CD4-positive, alpha-beta T cell (primary cell): ENCODE measurements at regions of chr2 and their contacts with region 1.

Region 1: GRCh38 chr2:121530212-121530705 is 421 bp upstream of the RNU4ATAC start:
- DNase-seq: peak in 13 of 14 experiments; percentile 77 to 92 (median 81)
- ATAC-seq: peak; percentile 72
- H3K4me3 ChIP-seq: peak overlapping the region; percentile 94
- H3K4me3 Mint-ChIP-seq: peak overlapping the region; percentile 97
- H3K27ac ChIP-seq: peak overlapping the region; percentile 99 to 100
- H3K27ac Mint-ChIP-seq: peak overlapping the region; percentile 96
- H3K4me1 ChIP-seq: peaks cover 18% of the 10 kb centered on the region
- H3K4me1 Mint-ChIP-seq: peaks cover 48% of the 10 kb centered on the region
- H3K27me3 ChIP-seq: no peaks in the 10 kb centered on the region
- H3K27me3 Mint-ChIP-seq: no peaks in the 10 kb centered on the region
- CTCF ChIP-seq: no peak

Region 2: GRCh38 chr2:121400201-121400600 is 130.1 kb before region 1 on chr2:
- CTCF ChIA-PET with region 1: interaction called, 5 read pairs
- POLR2A ChIA-PET with region 1: interaction called, 7 read pairs
- intact Hi-C with region 1: loop called in 1 of 2 experiments (anchors 5 kb)
- DNase-seq: no peak
- ATAC-seq: no peak
- H3K4me3 ChIP-seq: no peak overlapping the region
- H3K4me3 Mint-ChIP-seq: no peak overlapping the region
- H3K27ac ChIP-seq: no peak overlapping the region
- H3K27ac Mint-ChIP-seq: no peak overlapping the region
- H3K4me1 ChIP-seq: no peaks in the 10 kb centered on the region
- H3K4me1 Mint-ChIP-seq: no peaks in the 10 kb centered on the region
- H3K27me3 ChIP-seq: no peaks in the 10 kb centered on the region
- H3K27me3 Mint-ChIP-seq: no peaks in the 10 kb centered on the region
- CTCF ChIP-seq: no peak

Region 3: DNA sequence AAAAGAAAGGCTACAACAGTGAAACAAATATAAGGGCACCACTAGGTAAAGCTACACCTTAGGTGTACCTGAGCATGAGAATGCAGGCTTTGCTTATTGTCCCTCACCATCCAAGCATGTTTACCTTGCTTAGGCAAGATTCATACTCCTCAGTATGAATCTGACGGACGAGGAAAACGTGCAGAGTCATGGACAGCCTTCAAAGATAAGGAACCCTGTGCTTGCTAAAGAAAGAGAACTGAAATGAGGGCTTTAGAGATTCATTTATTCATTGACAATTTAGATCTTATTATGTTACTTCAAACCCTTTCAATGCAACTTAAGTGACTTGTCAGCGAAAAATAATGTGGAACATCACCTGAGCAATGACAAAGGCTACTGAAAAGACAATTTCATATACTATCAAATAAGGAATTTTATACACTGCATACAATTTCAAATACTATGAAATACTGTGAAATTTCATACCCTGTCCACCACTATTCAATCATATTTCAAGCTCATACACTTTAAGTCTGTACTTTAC is 97.3 kb after region 1 on chr2:
- CTCF ChIA-PET with region 1: no interaction called
- POLR2A ChIA-PET with region 1: no interaction called
- intact Hi-C with region 1: no loop called
- DNase-seq: no peak
- ATAC-seq: no peak
- H3K4me3 ChIP-seq: no peak overlapping the region
- H3K4me3 Mint-ChIP-seq: no peak overlapping the region
- H3K27ac ChIP-seq: no peak overlapping the region
- H3K27ac Mint-ChIP-seq: no peak overlapping the region
- H3K4me1 ChIP-seq: no peaks in the 10 kb centered on the region
- H3K4me1 Mint-ChIP-seq: peaks cover 26% of the 10 kb centered on the region
- H3K27me3 ChIP-seq: no peaks in the 10 kb centered on the region
- H3K27me3 Mint-ChIP-seq: no peaks in the 10 kb centered on the region
- CTCF ChIP-seq: no peak

Region 4: GRCh38 chr2:121699421-121700333 is 169.4 kb after region 1 on chr2:
- CTCF ChIA-PET with region 1: interaction called, 8 read pairs
- POLR2A ChIA-PET with region 1: interaction called, 12 read pairs
- intact Hi-C with region 1: loop called in 1 of 2 experiments (anchors 5 kb)
- DNase-seq: peak; percentile 63 to 94 (median 75)
- ATAC-seq: peak; percentile 94
- H3K4me3 ChIP-seq: peak overlapping the region; percentile 39
- H3K4me3 Mint-ChIP-seq: peak overlapping the region; percentile 75
- H3K27ac ChIP-seq: peak overlapping the region; percentile 58 to 74
- H3K27ac Mint-ChIP-seq: peak overlapping the region; percentile 88
- H3K4me1 ChIP-seq: peaks cover 28% of the 10 kb centered on the region
- H3K4me1 Mint-ChIP-seq: peaks cover 38% of the 10 kb centered on the region
- H3K27me3 ChIP-seq: no peaks in the 10 kb centered on the region
- H3K27me3 Mint-ChIP-seq: no peaks in the 10 kb centered on the region
- CTCF ChIP-seq: no peak

Region 5: GRCh38 chr2:121736462-121737341 is 206.4 kb after region 1 on chr2 and contains the start of gene NIFK:
- CTCF ChIA-PET with region 1: interaction called, 7 read pairs
- POLR2A ChIA-PET with region 1: interaction called, 52 read pairs
- intact Hi-C with region 1: loop called (anchors 1 kb)
- DNase-seq: peak; percentile 99 to 100 (median 100)
- ATAC-seq: peak; percentile 86
- H3K4me3 ChIP-seq: peak within 1 kb of the TSS; percentile 67
- H3K4me3 Mint-ChIP-seq: peak within 1 kb of the TSS; percentile 97
- H3K27ac ChIP-seq: peak within 1 kb of the TSS; percentile 78 to 89
- H3K27ac Mint-ChIP-seq: peak within 1 kb of the TSS; percentile 99
- H3K4me1 ChIP-seq: peaks cover 28% of the 10 kb centered on the region
- H3K4me1 Mint-ChIP-seq: peaks cover 47% of the 10 kb centered on the region
- H3K27me3 ChIP-seq: no peaks in the 10 kb centered on the region
- H3K27me3 Mint-ChIP-seq: no peaks in the 10 kb centered on the region
- CTCF ChIP-seq: no peak
- total RNA-seq, gene NIFK: 43.6 to 47.7 TPM

Region 6: DNA sequence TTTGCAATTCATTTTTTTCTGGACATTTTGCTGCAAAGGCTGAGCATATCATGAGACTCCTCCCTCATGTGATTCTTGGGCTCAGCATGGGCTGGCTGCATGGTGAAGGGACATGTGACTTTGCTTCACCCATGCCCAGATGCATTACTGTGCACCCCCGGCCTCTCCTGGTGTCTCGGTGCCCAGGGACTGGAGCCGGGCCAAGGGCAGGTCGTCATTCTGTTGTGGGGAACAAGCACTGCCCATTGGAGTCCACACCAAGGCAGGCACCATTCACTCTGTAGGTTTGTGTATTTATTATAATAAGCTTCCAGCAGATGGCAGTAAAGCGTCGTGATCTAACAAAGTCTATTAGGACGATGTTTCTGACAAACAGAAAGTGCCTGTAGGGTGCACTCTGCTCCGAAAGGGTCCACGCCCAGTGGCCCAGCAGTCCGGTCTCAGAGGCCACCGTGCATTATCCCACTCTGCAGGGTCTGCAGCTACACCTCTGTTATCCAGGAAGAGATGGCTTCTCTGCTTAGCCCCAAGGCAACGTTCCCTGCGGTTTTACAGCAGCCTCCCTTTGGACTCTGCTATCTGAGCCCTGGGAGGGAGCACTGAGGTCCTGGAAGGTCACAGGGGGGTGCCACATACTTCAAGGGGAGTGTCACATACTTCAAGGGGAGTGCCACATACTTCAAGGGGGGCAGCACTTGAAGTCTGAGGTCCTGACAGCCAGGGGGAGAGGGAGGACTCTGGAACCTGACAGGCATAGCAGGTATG is 444.8 kb after region 1 on chr2:
- CTCF ChIA-PET with region 1: no interaction called
- POLR2A ChIA-PET with region 1: no interaction called
- intact Hi-C with region 1: loop called in 1 of 2 experiments (anchors 5 kb)
- DNase-seq: peak in 13 of 14 experiments; percentile 3 to 75 (median 12)
- ATAC-seq: peak; percentile 89
- H3K4me3 ChIP-seq: peak overlapping the region; percentile 49
- H3K4me3 Mint-ChIP-seq: peak overlapping the region; percentile 85
- H3K27ac ChIP-seq: no peak overlapping the region
- H3K27ac Mint-ChIP-seq: peak overlapping the region; percentile 11
- H3K4me1 ChIP-seq: peaks cover 10% of the 10 kb centered on the region
- H3K4me1 Mint-ChIP-seq: peaks cover 9% of the 10 kb centered on the region
- H3K27me3 ChIP-seq: peaks cover 0 to 7% of the 10 kb centered on the region in 2 experiments
- H3K27me3 Mint-ChIP-seq: peaks cover 5% of the 10 kb centered on the region
- CTCF ChIP-seq: peak; percentile 68